Naive thymus-derived CD4-positive, alpha-beta T cell (primary cell): ENCODE measurements at regions of chr6 and their contacts with region 1.

Region 1: DNA sequence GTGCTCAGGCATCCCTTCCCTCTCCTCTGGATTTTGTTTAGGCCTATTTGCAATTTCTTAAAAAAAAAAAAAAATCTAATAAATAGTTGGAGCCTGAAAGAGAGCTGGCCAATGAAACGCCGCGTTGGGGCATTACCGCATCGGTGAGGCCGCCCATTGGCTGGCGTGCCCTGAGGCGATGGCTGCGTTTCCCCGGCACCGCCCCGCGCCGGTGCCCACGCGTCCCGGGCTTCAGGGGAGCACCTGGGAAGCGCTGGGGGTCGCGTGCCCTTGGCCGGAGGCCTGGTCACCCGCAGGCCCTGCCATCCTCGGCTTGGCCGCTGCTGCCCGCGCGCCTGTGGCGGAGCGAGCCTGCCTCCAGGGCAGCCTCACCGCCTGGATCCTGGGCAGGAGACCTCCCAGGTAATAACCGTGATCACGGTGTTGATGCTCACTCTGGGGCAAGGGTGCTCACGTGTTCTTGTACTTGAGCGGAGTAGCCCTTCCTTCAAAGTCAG is 155.4 kb downstream of the NRN1 start:
- DNase-seq: peak; percentile 57 to 81 (median 75)
- ATAC-seq: peak; percentile 96
- H3K4me3 ChIP-seq: peak overlapping the region; percentile 73
- H3K4me3 Mint-ChIP-seq: peak overlapping the region; percentile 81 to 94 (median 89)
- H3K27ac ChIP-seq: peak overlapping the region; percentile 73
- H3K27ac Mint-ChIP-seq: peak overlapping the region in 8 of 9 donors; percentile 43 to 96 (median 89)
- H3K4me1 ChIP-seq: peaks cover 0 to 10% of the 10 kb centered on the region in 2 donors
- H3K4me1 Mint-ChIP-seq: peaks cover 5 to 19% (median 10%) of the 10 kb centered on the region in 7 donors
- H3K27me3 ChIP-seq: no peaks in the 10 kb centered on the region
- H3K27me3 Mint-ChIP-seq: peaks cover 4 to 28% (median 7%) of the 10 kb centered on the region in 5 donors

Region 2: GRCh38 chr6:5003604-5004372 is 847.5 kb before region 1 on chr6 and contains the start of gene RPP40:
- CTCF ChIA-PET with region 1: no interaction called
- POLR2A ChIA-PET with region 1: no interaction called
- intact Hi-C with region 1: loop called in 1 of 2 experiments (anchors 10 kb)
- DNase-seq: peak; percentile 97 to 99 (median 99)
- ATAC-seq: peak; percentile 97
- H3K4me3 ChIP-seq: peak within 1 kb of the TSS; percentile 91
- H3K4me3 Mint-ChIP-seq: peak within 1 kb of the TSS; percentile 88 to 95 (median 94)
- H3K27ac ChIP-seq: peak within 1 kb of the TSS; percentile 82
- H3K27ac Mint-ChIP-seq: peak within 1 kb of the TSS; percentile 91 to 98 (median 94)
- H3K4me1 ChIP-seq: peaks cover 9% of the 10 kb centered on the region in 2 donors
- H3K4me1 Mint-ChIP-seq: peaks cover 0 to 20% (median 13%) of the 10 kb centered on the region in 7 donors
- H3K27me3 ChIP-seq: no peaks in the 10 kb centered on the region
- H3K27me3 Mint-ChIP-seq: no peaks in the 10 kb centered on the region
- total RNA-seq, gene RPP40: 3.8 to 8.0 (median 5.1) TPM

Region 3: DNA sequence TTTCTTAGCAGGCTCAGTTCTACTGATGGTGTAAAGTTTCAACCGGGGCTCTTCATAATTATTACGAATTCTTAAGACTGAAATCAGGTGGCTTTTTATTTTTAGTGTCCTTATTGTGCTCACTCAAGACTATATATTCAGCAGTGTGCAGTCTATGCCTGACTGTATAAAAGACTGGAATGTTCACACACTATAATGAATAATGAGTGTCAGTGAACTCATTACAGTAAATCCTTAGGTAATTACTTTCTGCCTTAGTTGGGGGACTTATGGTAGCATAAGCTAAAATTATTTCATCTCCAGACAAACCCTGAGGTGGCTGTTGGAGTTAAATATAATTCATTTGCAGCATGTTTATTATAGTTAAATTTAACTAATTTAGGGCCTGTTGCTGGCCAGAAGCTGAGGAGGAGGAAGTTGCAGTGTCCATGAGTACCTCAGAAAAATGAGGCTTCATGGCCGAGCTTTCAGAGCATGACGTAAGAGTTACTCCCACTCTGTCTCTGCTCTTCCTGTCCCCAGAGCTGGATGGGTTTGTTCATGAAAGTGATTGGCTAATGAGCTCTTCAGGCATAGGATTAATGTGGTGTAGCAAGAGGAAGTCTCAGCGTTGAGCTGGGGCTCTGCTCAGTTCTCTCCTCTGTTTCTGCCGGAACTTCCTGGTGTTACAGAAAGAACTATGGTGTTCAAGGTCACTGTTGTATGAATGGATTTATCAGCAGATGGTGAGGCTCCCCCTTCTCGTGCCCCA is 180.3 kb before region 1 on chr6:
- CTCF ChIA-PET with region 1: no interaction called
- POLR2A ChIA-PET with region 1: no interaction called
- intact Hi-C with region 1: no loop called
- DNase-seq: peak in 5 of 9 donors; percentile 32 to 49 (median 43)
- ATAC-seq: peak; percentile 88
- H3K4me3 ChIP-seq: no peak overlapping the region
- H3K4me3 Mint-ChIP-seq: peak overlapping the region; percentile 23 to 82 (median 64)
- H3K27ac ChIP-seq: no peak overlapping the region
- H3K27ac Mint-ChIP-seq: peak overlapping the region; percentile 43 to 90 (median 72)
- H3K4me1 ChIP-seq: peaks cover 0 to 47% of the 10 kb centered on the region in 2 donors
- H3K4me1 Mint-ChIP-seq: peaks cover 28 to 84% (median 75%) of the 10 kb centered on the region in 7 donors
- H3K27me3 ChIP-seq: no peaks in the 10 kb centered on the region
- H3K27me3 Mint-ChIP-seq: no peaks in the 10 kb centered on the region

Region 4: DNA sequence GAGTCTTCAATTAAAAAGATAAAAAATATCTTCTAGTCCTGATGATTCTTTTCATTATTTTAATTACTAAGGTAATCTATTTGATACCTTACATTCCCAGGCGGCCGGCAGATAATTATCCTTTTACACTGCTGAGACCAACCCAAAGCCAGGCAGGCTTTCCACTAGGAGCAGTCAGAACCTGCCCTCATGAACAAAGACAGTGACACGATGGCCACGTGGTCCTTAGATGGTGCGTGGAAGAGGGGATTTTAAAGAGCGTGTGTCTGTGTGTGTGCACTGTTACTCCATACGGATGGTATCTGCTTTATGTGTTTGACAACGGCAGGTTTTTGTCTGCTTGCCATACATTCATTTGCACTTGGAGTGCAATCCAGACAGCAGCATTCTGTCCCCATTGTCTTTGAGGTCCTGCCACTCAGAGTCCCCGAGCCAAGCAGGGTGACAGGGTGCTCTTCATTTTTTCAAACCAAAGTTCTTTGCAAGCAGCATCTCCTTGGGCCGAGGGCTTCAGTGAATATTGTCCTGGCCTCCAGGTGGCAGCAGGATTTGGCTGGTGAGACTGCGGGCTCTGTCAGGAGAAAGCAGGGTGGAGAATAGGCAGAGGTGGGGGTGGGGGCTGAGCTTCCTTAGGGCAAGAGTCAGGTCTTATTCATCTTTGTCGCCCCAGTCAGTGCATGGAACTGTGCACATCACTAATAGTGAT is 105.1 kb before region 1 on chr6:
- CTCF ChIA-PET with region 1: no interaction called
- POLR2A ChIA-PET with region 1: no interaction called
- intact Hi-C with region 1: no loop called
- DNase-seq: no peak
- ATAC-seq: no peak
- H3K4me3 ChIP-seq: no peak overlapping the region
- H3K4me3 Mint-ChIP-seq: no peak overlapping the region
- H3K27ac ChIP-seq: no peak overlapping the region
- H3K27ac Mint-ChIP-seq: no peak overlapping the region
- H3K4me1 ChIP-seq: no peaks in the 10 kb centered on the region
- H3K4me1 Mint-ChIP-seq: peaks cover 0 to 23% (median 4%) of the 10 kb centered on the region in 7 donors
- H3K27me3 ChIP-seq: no peaks in the 10 kb centered on the region
- H3K27me3 Mint-ChIP-seq: no peaks in the 10 kb centered on the region

Region 5: DNA sequence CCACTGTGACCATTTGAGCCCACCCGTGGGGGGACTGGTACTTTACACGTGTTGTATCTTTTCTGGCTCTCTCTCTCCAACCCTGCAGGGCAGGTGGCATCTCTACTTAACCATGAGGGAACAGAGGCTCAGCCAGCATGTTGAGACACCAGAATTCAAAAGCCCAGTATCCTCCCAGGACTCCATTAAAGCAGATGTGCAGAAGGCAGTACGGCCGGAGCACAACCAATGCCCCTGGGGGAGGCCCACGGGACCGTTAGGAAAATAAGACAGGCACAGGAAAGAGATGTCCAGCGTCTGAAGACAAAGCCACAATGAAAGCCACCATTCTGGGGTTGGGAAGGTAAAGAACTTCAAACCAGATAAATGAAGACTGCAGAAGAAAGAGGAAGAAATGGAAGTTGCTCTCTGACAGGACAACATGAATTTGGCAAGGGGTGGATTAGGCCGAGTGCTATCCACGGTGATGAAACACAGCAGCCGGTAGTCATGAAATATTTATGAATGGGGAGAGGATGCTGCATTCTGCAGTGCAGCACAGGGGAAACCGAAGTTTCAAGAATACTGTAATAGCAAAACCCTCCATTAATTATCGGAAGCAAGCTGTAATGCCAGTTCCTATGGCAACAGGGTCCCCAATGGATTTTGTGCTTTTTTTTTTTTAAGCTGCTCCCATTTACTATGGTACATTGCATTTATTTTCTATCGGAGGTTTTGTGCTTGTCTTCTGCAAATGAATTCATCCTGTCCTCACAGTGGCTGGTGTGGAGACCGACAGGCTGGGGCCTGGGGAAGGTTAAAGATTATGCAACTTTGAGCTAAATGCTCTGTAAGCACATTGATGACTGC is 24.0 kb before region 1 on chr6:
- CTCF ChIA-PET with region 1: no interaction called
- POLR2A ChIA-PET with region 1: interaction called, 9 read pairs
- intact Hi-C with region 1: loop called in 1 of 2 experiments (anchors 1 kb)
- DNase-seq: no peak
- ATAC-seq: no peak
- H3K4me3 ChIP-seq: no peak overlapping the region
- H3K4me3 Mint-ChIP-seq: peak overlapping the region in 2 of 10 donors; percentile 12 to 52
- H3K27ac ChIP-seq: no peak overlapping the region
- H3K27ac Mint-ChIP-seq: peak overlapping the region in 4 of 9 donors; percentile 2 to 68 (median 38)
- H3K4me1 ChIP-seq: peaks cover 25 to 40% of the 10 kb centered on the region in 2 donors
- H3K4me1 Mint-ChIP-seq: peaks cover 28 to 76% (median 66%) of the 10 kb centered on the region in 7 donors
- H3K27me3 ChIP-seq: no peaks in the 10 kb centered on the region
- H3K27me3 Mint-ChIP-seq: no peaks in the 10 kb centered on the region

Region 6: GRCh38 chr6:5866547-5867101 is 15.3 kb after region 1 on chr6:
- CTCF ChIA-PET with region 1: interaction called, 3 read pairs
- POLR2A ChIA-PET with region 1: interaction called, 15 read pairs
- intact Hi-C with region 1: loop called (anchors 1 kb)
- DNase-seq: peak in 6 of 9 donors; percentile 16 to 42 (median 32)
- ATAC-seq: peak; percentile 76
- H3K4me3 ChIP-seq: peak overlapping the region; percentile 36
- H3K4me3 Mint-ChIP-seq: peak overlapping the region; percentile 69 to 86 (median 80)
- H3K27ac ChIP-seq: peak overlapping the region; percentile 70
- H3K27ac Mint-ChIP-seq: peak overlapping the region; percentile 91 to 100 (median 98)
- H3K4me1 ChIP-seq: peaks cover 31 to 44% of the 10 kb centered on the region in 2 donors
- H3K4me1 Mint-ChIP-seq: peaks cover 30 to 66% (median 59%) of the 10 kb centered on the region in 7 donors
- H3K27me3 ChIP-seq: no peaks in the 10 kb centered on the region
- H3K27me3 Mint-ChIP-seq: no peaks in the 10 kb centered on the region

Region 7: DNA sequence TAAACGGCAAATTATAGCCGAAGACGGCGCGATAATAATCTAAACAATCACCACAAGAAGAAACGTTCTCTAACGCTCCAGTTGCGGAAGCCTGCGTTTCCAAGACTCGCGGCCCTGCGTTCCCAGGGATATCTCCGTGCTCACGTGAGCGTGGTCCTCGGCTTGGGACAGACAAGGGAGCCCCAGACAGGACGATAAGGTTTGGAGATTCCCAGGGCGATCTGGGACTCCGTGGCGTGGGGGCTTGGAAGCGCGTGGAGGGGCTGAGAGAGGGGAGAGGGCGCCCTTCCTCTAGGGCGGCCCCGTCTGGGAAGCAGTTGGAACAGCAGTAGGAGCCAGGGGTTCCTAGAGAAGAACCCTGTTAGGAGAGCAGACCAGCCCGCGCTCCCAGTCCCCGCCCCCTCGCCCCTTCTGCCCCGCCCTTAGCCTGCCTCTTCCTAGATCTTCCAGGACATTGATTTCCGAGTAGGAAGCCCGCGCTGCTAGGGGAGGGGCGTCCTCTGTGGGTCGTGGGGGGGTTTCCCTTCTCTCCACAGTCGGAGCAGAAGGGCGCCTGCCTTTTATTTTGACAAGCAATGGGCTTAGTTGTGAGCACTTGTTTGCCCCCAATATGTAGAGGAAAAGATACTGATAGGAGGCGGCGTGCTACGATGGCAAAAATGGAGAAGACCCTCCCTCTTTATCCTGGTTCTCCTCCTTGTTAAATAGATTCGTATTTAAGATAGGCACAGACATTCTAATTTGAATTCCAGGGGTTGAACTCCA is 144.8 kb after region 1 on chr6:
- CTCF ChIA-PET with region 1: no interaction called
- POLR2A ChIA-PET with region 1: no interaction called
- intact Hi-C with region 1: loop called in 1 of 2 experiments (anchors 1 kb)
- DNase-seq: peak in 1 of 9 donors; percentile 29
- ATAC-seq: no peak
- H3K4me3 ChIP-seq: peak overlapping the region; percentile 84
- H3K4me3 Mint-ChIP-seq: peak overlapping the region; percentile 87 to 93 (median 90)
- H3K27ac ChIP-seq: no peak overlapping the region
- H3K27ac Mint-ChIP-seq: peak overlapping the region in 8 of 9 donors; percentile 15 to 86 (median 64)
- H3K4me1 ChIP-seq: peaks cover 27 to 53% of the 10 kb centered on the region in 2 donors
- H3K4me1 Mint-ChIP-seq: peaks cover 48 to 69% (median 58%) of the 10 kb centered on the region in 7 donors
- H3K27me3 ChIP-seq: peaks cover 44 to 80% of the 10 kb centered on the region in 2 donors
- H3K27me3 Mint-ChIP-seq: peaks cover 86 to 95% (median 93%) of the 10 kb centered on the region in 5 donors

Region 8: DNA sequence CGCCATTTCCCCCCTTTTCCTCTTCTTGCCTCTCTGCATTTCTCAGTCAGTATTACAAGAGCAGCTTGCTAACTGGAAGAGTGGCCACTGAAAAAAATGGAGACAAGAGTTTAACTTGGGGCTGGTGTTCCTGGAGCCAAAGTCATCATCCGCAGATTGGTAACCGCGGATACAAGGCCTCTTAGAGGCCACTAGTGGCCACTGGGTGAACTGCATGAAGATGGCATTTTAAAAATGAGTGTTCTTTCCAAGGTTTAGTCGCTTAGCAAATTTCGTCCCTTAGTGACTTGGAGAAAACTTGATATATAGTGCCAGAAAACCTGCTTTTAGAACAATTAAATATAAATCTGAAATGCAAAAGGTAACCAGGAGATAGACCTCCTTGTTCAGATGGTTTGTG is 464.4 kb after region 1 on chr6:
- CTCF ChIA-PET with region 1: no interaction called
- POLR2A ChIA-PET with region 1: interaction called, 10 read pairs
- intact Hi-C with region 1: no loop called
- DNase-seq: peak in 4 of 9 donors; percentile 11 to 27 (median 20)
- ATAC-seq: peak; percentile 57
- H3K4me3 ChIP-seq: no peak overlapping the region
- H3K4me3 Mint-ChIP-seq: no peak overlapping the region
- H3K27ac ChIP-seq: no peak overlapping the region
- H3K27ac Mint-ChIP-seq: peak overlapping the region in 1 of 9 donors; percentile 47
- H3K4me1 ChIP-seq: no peaks in the 10 kb centered on the region
- H3K4me1 Mint-ChIP-seq: peaks cover 0 to 5% (median 0%) of the 10 kb centered on the region in 7 donors
- H3K27me3 ChIP-seq: no peaks in the 10 kb centered on the region
- H3K27me3 Mint-ChIP-seq: peaks cover 34 to 52% (median 51%) of the 10 kb centered on the region in 5 donors